Cardiac septum (tissue), 1 donor: ENCODE measurements at regions of chr5 and their contacts with region 1.

Region 1: GRCh38 chr5:132293066-132293991 is 865 bp upstream of the SLC22A4 start:
- DNase-seq: peak; percentile 94

Region 2: GRCh38 chr5:132227485-132228240 is 65.7 kb before region 1 on chr5 and contains the start of gene P4HA2:
- intact Hi-C with region 1: loop called (anchors 2 kb)
- DNase-seq: peak; percentile 93
- total RNA-seq, gene P4HA2: 50.5 TPM

Region 3: DNA sequence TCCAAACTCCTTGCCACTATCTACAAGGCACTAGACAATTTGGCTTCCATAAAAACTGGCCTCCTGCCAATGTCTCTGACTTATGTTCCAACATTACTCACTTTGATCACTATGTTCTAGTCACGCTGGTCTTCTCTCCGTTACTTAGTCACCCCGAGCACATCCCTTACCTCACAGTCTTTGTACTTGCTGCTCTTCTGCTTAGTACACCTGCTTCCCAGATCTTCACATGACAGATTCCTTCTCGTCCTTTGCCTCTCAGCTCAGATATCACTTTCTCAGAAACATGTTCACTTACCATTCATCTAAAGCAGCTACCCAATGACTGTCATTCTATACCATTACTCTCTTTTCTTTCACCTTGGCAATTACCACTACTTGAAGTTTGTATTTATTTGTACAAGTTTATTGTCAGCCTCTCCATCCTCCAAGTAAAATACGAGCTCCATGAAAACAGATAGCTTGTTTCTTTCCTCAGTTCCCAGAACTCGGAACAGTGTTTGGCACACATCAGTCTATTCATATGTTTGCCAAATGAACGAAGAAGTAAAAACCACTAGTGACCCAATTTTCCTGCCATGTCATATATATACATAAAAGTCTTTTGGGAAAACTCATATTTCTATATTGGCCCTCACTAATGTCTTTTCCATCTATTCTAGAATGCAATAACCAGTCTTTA is 70.2 kb after region 1 on chr5:
- intact Hi-C with region 1: loop called (anchors 5 kb)
- DNase-seq: no peak